ENCODE measurements at regions of chr6 and their contacts with region 1.

Region 1: DNA sequence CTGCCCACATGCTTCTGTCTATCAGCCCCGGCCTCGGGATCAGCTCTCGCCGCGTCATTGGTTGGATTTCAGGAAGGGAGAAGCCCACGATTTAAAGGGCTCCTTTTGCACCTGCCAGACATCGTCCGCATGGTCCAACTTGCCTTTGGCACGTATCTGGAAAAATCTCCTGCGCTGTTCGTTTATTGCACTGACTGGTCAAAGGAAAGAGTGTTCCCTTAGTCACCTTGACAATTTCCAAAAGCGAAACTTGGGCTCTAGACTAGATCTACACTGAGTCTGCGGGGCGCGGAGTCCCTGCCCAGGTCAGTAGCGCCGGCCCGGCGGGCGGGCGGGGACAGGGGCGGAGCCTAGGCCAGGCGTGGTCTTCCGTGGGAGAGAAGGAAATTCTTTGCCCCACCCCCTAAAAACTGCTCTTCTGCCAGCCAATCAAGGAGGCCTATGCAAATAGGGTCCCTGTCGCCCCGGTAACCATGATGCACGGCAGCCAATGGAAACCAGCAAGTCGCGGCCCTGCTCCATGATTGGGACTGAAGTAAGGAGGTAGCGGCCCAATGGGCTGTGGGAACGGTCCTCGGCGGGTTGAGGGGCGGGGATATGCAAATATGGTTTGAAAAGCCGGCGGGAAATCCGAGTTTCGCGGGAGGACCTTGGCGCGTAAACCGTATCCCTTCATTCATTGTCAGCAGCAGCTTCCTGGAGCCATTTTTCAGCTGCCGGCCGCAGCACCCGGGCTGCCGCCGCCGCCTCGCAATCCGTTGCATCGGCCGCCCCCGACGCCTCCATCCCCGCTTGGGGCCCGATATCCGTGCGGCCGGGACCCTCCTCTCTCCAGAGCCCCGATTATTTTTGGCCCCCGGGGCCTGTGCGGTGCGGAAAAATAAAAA is at the start of gene E2F3:
- DNase-seq: peak; percentile 100
- H3K4me3 ChIP-seq: peak within 1 kb of the TSS; percentile 83
- H3K27ac ChIP-seq: peak within 1 kb of the TSS; percentile 95
- H3K4me1 ChIP-seq: peaks cover 0 to 3% of the 10 kb centered on the region in 2 donors
- H3K27me3 ChIP-seq: no peaks in the 10 kb centered on the region
- CTCF ChIP-seq: no peak
- total RNA-seq, gene E2F3: 1.1 TPM

Region 2: DNA sequence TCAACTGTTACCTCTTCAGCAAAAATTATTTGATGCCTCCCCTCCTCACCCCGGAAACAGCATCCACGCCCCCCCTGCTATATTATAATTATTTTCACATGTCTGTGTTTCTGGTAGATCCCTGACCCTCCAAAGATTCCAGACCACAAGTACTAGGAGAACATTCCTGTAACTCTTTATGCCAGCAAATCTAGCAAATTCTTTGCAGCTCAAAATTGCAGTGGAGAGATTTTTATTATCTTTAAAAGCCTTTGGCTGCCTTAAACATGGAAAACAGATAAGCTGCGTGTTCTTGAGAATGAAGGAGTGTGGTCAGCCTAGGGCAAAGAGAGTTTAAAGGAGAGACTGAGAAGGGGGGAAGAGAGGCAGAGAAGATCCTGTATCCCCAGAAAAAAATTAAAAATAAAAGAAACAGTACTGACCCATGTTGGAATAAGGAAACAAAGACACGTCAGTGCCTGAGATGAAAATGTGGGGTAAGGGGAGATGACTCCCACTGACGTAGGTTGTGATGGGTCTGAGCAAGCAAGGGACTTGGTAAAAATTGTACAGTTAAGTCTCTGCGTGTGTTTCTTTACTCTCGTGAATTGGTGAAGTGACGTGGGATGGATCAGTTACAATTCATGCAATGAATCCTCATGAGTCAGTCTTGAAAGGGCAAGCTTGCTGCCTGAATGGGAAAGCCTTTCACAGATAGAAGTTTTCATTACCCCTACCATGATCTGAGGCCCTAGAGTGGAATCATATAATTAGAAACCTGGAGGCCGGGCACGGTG is 556.0 kb before region 1 on chr6:
- intact Hi-C with region 1: loop called (anchors 10 kb)
- DNase-seq: no peak
- H3K4me3 ChIP-seq: peak overlapping the region; percentile 13 to 24
- H3K27ac ChIP-seq: peak overlapping the region; percentile 96
- H3K4me1 ChIP-seq: peaks cover 0 to 24% of the 10 kb centered on the region in 2 donors
- H3K27me3 ChIP-seq: no peaks in the 10 kb centered on the region
- CTCF ChIP-seq: no peak

Region 3: GRCh38 chr6:20291764-20292580 is 109.5 kb before region 1 on chr6:
- intact Hi-C with region 1: loop called (anchors 5 kb)
- DNase-seq: peak; percentile 12 to 90
- H3K4me3 ChIP-seq: no peak overlapping the region
- H3K27ac ChIP-seq: no peak overlapping the region
- H3K4me1 ChIP-seq: no peaks in the 10 kb centered on the region
- H3K27me3 ChIP-seq: no peaks in the 10 kb centered on the region
- CTCF ChIP-seq: peak; percentile 79 to 94 (median 88)

Region 4: DNA sequence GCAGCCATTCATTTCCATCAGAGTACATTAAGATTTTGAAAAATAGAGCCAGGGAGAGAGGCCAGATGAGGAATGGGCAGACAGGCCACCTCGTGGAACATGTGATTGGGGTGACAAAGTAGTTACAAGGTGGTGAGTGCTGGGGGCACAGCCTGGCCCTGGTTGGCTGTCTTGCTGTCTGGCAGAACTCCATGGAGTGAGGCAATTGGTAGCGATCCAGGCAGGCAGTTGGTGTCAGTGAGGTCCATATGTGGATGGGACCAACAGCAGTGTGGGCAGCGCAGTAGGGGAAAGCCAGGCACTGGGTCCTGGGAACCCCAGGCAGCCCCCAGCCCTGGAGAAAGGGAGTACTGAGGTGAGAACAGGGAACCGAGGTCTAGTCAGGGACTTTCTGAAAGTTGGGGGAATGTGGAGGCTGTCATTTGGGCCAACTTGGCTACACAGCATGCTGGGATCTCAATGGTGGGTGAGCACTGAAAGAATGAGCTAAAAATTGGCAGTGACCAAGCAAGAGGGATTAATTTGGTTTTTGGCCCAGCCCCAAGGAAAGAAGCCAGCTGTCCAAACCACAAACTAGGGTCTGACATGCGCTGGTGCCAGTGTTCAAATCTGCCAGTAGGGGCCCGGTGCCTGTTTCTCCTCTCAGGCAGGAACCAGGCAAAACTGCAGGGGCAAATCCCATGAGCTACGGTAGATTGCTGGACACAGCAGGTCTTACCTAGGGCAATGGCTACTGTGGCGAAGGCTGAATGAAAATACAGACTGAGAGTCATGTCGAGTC is 61.2 kb before region 1 on chr6:
- intact Hi-C with region 1: no loop called
- DNase-seq: no peak
- H3K4me3 ChIP-seq: no peak overlapping the region
- H3K27ac ChIP-seq: no peak overlapping the region
- H3K4me1 ChIP-seq: no peaks in the 10 kb centered on the region
- H3K27me3 ChIP-seq: no peaks in the 10 kb centered on the region
- CTCF ChIP-seq: no peak

Region 5: DNA sequence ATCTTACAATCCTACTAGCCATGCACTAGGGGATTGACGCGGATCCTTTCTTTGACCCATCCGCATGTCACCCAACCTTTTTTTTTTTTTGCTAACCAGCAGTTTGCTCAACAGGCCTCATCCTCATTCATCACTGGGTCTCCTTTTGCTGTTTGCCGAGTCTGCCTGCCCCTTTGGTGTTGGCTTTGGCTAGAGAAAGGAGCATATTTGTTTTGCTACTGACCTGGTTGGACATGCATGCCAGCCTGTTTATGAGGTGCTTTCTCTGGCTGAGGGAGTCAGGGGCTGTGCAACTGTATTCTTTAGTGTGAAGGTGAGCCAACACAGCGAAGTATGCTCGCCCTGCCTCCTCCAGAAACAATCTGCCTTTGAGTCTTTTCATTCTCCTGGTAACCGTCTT is 40.5 kb after region 1 on chr6:
- intact Hi-C with region 1: loop called (anchors 2 kb)
- DNase-seq: no peak
- H3K4me3 ChIP-seq: no peak overlapping the region
- H3K27ac ChIP-seq: no peak overlapping the region
- H3K4me1 ChIP-seq: peaks cover 0 to 21% of the 10 kb centered on the region in 2 donors
- H3K27me3 ChIP-seq: no peaks in the 10 kb centered on the region
- CTCF ChIP-seq: no peak

Region 6: DNA sequence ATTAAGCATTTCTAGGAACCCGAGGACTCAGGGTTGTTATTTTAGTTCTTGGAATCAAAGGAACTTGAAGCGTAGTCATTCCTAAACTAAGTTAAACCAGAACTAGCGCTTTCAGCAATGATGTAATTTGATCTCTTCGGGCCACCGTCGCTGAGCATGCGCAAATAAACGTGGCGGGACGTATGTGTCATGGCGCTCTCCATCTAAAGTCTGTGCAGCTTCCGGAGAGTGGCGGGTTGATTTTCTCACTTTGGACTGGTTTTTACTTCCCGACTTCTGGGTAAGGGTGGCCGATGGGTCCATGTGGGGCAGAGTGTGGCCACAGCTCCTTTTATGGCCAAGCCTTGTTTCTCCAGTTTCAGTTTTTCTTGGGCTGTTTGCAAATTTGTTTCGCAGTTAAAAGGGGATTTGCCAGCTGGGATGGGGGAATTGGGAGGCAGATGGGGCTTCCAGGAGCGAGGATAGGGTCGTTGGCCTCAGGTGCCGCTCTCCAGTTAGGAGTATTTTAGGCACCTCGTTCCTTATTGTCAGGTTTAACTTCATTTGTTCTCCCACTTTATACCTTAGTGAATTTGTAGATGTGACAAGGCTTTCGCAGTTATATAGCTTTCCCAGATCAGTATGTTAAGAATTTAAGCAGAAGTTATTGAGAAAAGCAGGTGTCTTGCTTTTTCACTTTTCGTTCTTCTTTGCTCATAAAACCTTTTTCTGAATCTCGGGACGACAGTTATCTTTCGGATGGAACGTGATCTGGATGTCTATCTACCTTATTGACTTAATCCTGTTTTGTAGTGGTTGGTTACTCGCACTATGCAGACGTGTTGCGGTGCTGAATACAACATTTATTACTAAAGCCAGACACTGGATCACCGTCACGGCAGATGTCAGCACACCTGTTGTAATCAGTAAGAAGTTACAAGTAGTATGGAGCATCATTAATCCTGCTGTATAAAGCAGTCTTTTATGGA is 133.1 kb after region 1 on chr6 and contains the start of gene CDKAL1:
- intact Hi-C with region 1: loop called (anchors 1 kb)
- DNase-seq: peak; percentile 71 to 96
- H3K4me3 ChIP-seq: peak within 1 kb of the TSS; percentile 69 to 83
- H3K27ac ChIP-seq: peak within 1 kb of the TSS; percentile 85
- H3K4me1 ChIP-seq: peaks cover 0 to 12% of the 10 kb centered on the region in 2 donors
- H3K27me3 ChIP-seq: no peaks in the 10 kb centered on the region
- CTCF ChIP-seq: no peak
- total RNA-seq, gene CDKAL1: 11.9 TPM

Region 7: DNA sequence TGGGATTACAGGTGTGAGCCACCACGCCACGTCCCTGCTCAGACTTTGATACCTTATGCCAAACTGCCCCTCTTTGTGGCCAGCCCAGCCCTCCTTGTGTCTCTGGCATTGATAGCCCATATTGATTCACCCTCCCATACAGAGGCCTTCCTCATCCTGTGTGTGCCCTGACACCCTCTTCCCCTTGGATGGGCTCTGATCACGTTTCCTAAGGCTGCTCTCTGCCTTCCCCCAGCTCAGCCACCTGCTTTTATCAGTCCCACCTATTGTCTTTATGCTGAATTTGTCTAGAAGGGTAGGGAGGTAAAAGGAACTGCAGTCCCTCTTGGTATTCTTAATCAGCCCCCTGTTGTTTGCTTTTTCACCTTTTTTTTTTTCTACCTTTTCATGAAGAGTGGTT is 228.7 kb after region 1 on chr6:
- intact Hi-C with region 1: no loop called
- DNase-seq: no peak
- H3K4me3 ChIP-seq: no peak overlapping the region
- H3K27ac ChIP-seq: no peak overlapping the region
- H3K4me1 ChIP-seq: no peaks in the 10 kb centered on the region
- H3K27me3 ChIP-seq: no peaks in the 10 kb centered on the region
- CTCF ChIP-seq: no peak